Right ventricle myocardium inferior (tissue), 1 donor: ENCODE measurements at regions of chr1 and their contacts with region 1.

Region 1: GRCh38 chr1:28208818-28209441 is 23.9 kb downstream of the DNAJC8 start:
- DNase-seq: no peak
- ATAC-seq: peak; percentile 67

Region 2: GRCh38 chr1:27858072-27858958 is 350.6 kb before region 1 on chr1:
- intact Hi-C with region 1: loop called (anchors 5 kb)
- DNase-seq: peak; percentile 89
- ATAC-seq: peak; percentile 90

Region 3: GRCh38 chr1:28091043-28091781 is 117.7 kb before region 1 on chr1:
- intact Hi-C with region 1: loop called (anchors 1 kb)
- DNase-seq: peak; percentile 69
- ATAC-seq: no peak

Region 4: GRCh38 chr1:28296401-28297261 is 87.7 kb after region 1 on chr1:
- intact Hi-C with region 1: no loop called
- DNase-seq: no peak
- ATAC-seq: no peak

Region 5: DNA sequence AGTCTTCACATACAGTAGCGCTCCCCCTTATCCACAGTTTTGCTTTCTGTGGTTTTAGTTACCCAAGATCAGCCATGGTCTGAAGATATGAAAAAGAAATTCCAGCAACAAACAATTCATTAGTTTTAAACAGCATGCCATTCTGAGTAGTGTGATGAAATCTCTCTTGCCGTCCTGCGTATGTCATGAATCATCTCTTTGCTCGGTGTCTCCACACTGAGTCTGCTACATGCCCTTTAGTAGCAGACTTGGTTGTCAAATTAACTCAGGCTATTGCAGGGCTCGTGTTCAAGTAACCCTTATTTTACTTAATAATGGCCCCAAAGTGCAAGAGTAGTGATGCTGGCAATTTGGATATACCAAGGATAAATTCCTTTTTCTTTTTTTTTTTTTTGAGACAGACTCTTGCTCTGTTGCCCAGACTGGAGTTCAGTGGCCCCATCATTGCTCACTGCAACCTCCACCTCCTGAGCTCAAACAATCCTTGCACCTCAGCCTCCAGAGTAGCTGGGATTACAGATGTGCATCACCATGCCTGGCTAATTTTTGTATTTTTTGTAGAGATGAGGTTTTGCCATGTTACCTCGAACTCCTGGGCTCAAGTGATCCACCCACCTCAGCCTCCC is 183.2 kb after region 1 on chr1:
- intact Hi-C with region 1: no loop called
- DNase-seq: no peak
- ATAC-seq: no peak